Activated T-helper 1 cell treated with anti-CD3 and anti-CD28 coated beads, Interleukin-12 subunit alpha, Interleukin-12 subunit beta, Interleukin-2, Interleukin-4 antibody, amounts not matched to agents 30 ng/mL and 10 ng/mL and 1 ng/mL, durations not matched to agents 14 hours and 24 hours and 36 hours (primary cell): ENCODE measurements at regions of chr9 and their contacts with region 1.

Region 1: GRCh38 chr9:85658716-85659115 is 83.0 kb downstream of the AGTPBP1 start:
- DNase-seq: no peak
- H3K4me3 Mint-ChIP-seq: no peak overlapping the region
- H3K27ac Mint-ChIP-seq: no peak overlapping the region
- H3K4me1 Mint-ChIP-seq: no peaks in the 10 kb centered on the region
- H3K27me3 Mint-ChIP-seq: no peaks in the 10 kb centered on the region

Region 2: GRCh38 chr9:85586684-85587083 is 72.0 kb before region 1 on chr9:
- intact Hi-C with region 1: loop called (anchors 10 kb)
- DNase-seq: no peak
- H3K4me3 Mint-ChIP-seq: no peak overlapping the region
- H3K27ac Mint-ChIP-seq: no peak overlapping the region
- H3K4me1 Mint-ChIP-seq: no peaks in the 10 kb centered on the region
- H3K27me3 Mint-ChIP-seq: no peaks in the 10 kb centered on the region